CD8-positive, alpha-beta T cell (primary cell): ENCODE measurements at regions of chr2 and their contacts with region 1.

Region 1: DNA sequence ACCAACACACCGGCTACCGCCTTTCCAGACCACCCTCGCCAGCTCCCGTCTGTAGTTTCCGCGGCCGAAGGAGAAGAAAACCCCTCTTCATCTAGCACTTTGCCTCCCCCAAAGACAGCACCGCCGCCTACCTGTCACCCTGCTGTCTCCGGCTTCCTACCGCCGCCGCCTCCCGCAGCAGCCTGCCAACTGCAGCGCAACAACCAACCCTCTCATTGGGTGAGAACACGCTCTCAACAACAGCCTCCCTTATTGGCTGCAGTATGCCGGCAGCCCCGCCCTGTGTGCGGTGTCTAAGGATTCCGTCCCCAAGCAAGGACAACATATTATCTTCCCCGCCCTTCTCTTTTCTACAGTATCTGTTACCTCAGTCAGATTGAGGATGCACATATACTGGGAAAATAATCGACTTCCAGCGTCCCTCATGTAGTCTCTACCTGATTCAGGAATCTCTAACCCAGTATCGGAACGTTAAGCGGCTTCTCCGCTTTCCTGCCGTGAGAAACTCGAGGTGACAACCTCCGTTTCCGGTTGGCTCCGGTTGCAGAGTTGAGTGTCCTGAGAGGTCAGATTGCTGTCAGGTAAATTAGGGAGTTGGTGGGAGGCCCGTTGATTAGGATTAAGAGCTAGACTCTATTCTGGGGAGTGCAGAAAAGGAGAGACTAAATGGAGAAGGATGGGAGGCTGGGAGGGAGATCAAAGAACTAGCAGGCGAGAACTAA is at the starts of genes HYCC2 and NDUFB3:
- DNase-seq: peak; percentile 79 to 98 (median 92)
- ATAC-seq: peak; percentile 93
- H3K4me3 ChIP-seq: peak within 1 kb of the TSS; percentile 61 to 70
- H3K4me3 Mint-ChIP-seq: peak within 1 kb of the TSS; percentile 95
- H3K27ac ChIP-seq: peak within 1 kb of the TSS; percentile 61 to 81
- H3K27ac Mint-ChIP-seq: peak within 1 kb of the TSS; percentile 97
- H3K4me1 ChIP-seq: peaks cover 42% of the 10 kb centered on the region
- H3K4me1 Mint-ChIP-seq: peaks cover 54% of the 10 kb centered on the region
- H3K27me3 ChIP-seq: no peaks in the 10 kb centered on the region
- H3K27me3 Mint-ChIP-seq: no peaks in the 10 kb centered on the region
- CTCF ChIP-seq: peak; percentile 38
- total RNA-seq, gene HYCC2: 35.7 to 36.8 TPM
- total RNA-seq, gene NDUFB3: 11.6 to 13.1 TPM

Region 2: GRCh38 chr2:200578778-200579177 is 492.9 kb before region 1 on chr2:
- CTCF ChIA-PET with region 1: no interaction called
- POLR2A ChIA-PET with region 1: no interaction called
- intact Hi-C with region 1: loop called in 1 of 2 experiments (anchors 5 kb)
- DNase-seq: peak in 2 of 9 experiments; percentile 30 to 45
- ATAC-seq: no peak
- H3K4me3 ChIP-seq: no peak overlapping the region
- H3K4me3 Mint-ChIP-seq: no peak overlapping the region
- H3K27ac ChIP-seq: no peak overlapping the region
- H3K27ac Mint-ChIP-seq: no peak overlapping the region
- H3K4me1 ChIP-seq: no peaks in the 10 kb centered on the region
- H3K4me1 Mint-ChIP-seq: no peaks in the 10 kb centered on the region
- H3K27me3 ChIP-seq: no peaks in the 10 kb centered on the region
- H3K27me3 Mint-ChIP-seq: peaks cover 5% of the 10 kb centered on the region
- CTCF ChIP-seq: peak; percentile 35

Region 3: DNA sequence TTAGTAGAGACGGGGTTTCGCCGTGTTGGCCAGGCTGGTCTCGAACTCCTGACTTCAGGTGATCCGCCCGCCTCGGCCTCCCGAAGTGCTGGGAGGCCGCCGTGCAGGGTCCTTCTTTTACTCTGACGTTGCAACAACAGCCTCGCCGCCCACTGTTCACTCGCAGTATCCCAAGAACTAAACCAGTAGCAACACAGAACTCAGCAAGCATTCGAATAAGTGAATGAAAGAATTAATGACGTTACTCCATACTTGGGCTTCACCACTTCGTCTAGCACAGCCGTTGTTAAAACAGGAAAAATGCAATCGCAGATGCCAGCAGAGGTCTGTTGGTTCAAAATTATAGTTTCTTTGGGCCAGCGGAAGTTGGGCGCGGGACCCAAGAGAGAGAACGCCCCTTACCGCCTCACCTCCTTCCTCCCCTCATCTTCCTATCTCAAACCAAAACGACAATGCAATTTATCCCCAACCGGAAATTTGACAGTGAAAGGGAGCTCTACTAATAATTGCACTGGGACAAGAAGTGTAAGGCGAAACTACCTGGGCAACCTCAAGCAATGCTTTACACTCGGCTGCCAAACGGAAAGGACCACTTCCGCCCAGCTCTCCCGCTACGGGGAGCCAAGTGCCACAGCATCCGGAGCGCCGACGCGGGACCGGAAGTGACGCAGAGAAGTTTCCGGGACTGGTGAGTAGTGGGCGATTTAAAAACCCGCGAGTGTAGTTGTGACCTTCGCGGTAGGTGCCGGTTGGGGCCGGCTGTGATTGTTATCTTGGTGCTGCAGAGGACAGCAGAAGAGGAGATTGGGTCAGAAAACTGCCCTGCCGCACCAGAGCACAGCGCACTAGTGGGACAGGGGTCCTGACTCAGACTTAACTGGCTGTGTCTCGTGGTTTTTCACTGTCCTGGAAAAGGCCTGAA is 182.7 kb before region 1 on chr2 and contains the starts of genes NIF3L1 and PPIL3:
- CTCF ChIA-PET with region 1: interaction called, 5 read pairs
- POLR2A ChIA-PET with region 1: interaction called, 4 read pairs
- intact Hi-C with region 1: loop called (anchors 1 kb)
- DNase-seq: peak; percentile 92 to 99 (median 97)
- ATAC-seq: peak; percentile 70
- H3K4me3 ChIP-seq: peak within 1 kb of the TSS; percentile 77 to 78
- H3K4me3 Mint-ChIP-seq: peak within 1 kb of the TSS; percentile 94
- H3K27ac ChIP-seq: peak within 1 kb of the TSS; percentile 96
- H3K27ac Mint-ChIP-seq: peak within 1 kb of the TSS; percentile 100
- H3K4me1 ChIP-seq: peaks cover 21% of the 10 kb centered on the region
- H3K4me1 Mint-ChIP-seq: peaks cover 55% of the 10 kb centered on the region
- H3K27me3 ChIP-seq: no peaks in the 10 kb centered on the region
- H3K27me3 Mint-ChIP-seq: no peaks in the 10 kb centered on the region
- CTCF ChIP-seq: no peak
- total RNA-seq, gene NIF3L1: 3.8 to 4.9 TPM
- total RNA-seq, gene PPIL3: 48.6 to 51.0 TPM

Region 4: DNA sequence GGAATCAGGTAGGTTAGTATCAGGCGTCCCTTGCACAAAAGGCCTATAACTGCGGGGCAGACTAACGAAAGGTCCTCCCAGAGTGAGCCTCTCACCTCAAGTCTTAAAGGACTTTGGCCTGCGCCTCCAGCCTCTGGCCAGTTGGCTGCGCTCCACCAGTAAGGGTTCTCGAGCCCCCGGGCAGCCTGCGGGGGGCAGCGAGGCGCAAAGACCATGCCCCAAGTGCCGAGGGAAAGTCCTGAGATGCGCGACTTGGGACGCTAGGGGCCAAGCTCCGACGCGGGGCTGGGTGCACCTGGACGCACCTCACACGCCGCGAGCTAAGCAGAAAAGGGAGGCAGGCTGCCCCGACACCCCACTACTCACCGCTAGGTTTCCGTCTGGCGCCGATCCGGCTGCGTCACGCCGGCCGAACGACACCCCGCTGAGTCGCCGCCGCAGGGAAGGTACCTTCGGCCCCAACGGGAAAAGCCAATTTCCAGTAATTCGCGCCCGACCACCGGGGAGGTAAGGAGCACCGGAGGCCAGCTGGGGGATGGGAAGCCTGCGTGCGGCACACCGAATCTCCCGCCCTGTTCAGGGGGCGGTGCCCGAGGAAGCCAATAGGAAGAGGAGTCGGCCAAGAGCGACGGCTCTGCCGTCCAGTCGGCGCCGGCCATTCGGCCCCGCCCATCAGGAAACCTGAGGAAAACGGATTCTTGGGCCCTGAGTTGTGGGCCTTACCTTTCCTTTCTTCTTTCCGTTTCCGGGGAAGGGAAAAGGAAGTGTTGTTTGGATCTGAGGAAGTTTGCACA is 108.3 kb before region 1 on chr2 and contains the start of gene ORC2:
- CTCF ChIA-PET with region 1: interaction called, 12 read pairs
- POLR2A ChIA-PET with region 1: interaction called, 10 read pairs
- intact Hi-C with region 1: loop called (anchors 1 kb)
- DNase-seq: peak; percentile 84 to 96 (median 93)
- ATAC-seq: peak; percentile 94
- H3K4me3 ChIP-seq: peak within 1 kb of the TSS; percentile 70 to 90
- H3K4me3 Mint-ChIP-seq: peak within 1 kb of the TSS; percentile 99
- H3K27ac ChIP-seq: peak within 1 kb of the TSS; percentile 76 to 90
- H3K27ac Mint-ChIP-seq: peak within 1 kb of the TSS; percentile 99
- H3K4me1 ChIP-seq: peaks cover 30% of the 10 kb centered on the region
- H3K4me1 Mint-ChIP-seq: peaks cover 57% of the 10 kb centered on the region
- H3K27me3 ChIP-seq: no peaks in the 10 kb centered on the region
- H3K27me3 Mint-ChIP-seq: no peaks in the 10 kb centered on the region
- CTCF ChIP-seq: peak; percentile 51
- total RNA-seq, gene ORC2: 17.7 to 21.3 TPM

Region 5: GRCh38 chr2:201158111-201158929 is 86.7 kb after region 1 on chr2:
- CTCF ChIA-PET with region 1: interaction called, 46 read pairs
- POLR2A ChIA-PET with region 1: interaction called, 6 read pairs
- intact Hi-C with region 1: loop called (anchors 1 to 2 kb)
- DNase-seq: peak; percentile 21 to 83 (median 65)
- ATAC-seq: peak; percentile 93
- H3K4me3 ChIP-seq: no peak overlapping the region
- H3K4me3 Mint-ChIP-seq: no peak overlapping the region
- H3K27ac ChIP-seq: peak overlapping the region in 1 of 2 experiments; percentile 68
- H3K27ac Mint-ChIP-seq: peak overlapping the region; percentile 83
- H3K4me1 ChIP-seq: peaks cover 11% of the 10 kb centered on the region
- H3K4me1 Mint-ChIP-seq: peaks cover 18% of the 10 kb centered on the region
- H3K27me3 ChIP-seq: no peaks in the 10 kb centered on the region
- H3K27me3 Mint-ChIP-seq: no peaks in the 10 kb centered on the region
- CTCF ChIP-seq: peak; percentile 54